Posterior vena cava (tissue), 2 donors: ENCODE measurements at regions of chr2 and their contacts with region 1.

Region 1: GRCh38 chr2:23083966-23084365 is 301.0 kb upstream of the KLHL29 start:
- DNase-seq: no peak

Region 2: DNA sequence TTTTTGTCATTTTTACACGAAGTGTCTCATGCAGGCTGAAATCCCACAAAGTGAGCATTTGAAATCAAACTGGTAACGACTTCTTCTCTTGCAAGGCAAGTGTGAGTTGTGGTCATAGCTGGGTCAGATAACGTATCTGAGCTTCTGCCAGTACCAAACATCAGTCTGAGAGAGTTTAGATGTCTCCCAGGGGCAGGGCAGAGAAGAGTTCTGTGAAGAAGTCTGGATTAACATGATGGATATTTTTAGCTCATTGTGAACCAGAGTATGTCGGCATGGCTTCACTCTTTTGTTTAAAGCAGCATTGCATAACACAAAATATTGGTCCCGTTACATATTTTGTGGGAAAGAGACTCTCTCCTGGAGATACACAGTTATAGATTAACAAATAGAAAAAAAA is 354.5 kb before region 1 on chr2:
- intact Hi-C with region 1: no loop called
- DNase-seq: no peak

Region 3: DNA sequence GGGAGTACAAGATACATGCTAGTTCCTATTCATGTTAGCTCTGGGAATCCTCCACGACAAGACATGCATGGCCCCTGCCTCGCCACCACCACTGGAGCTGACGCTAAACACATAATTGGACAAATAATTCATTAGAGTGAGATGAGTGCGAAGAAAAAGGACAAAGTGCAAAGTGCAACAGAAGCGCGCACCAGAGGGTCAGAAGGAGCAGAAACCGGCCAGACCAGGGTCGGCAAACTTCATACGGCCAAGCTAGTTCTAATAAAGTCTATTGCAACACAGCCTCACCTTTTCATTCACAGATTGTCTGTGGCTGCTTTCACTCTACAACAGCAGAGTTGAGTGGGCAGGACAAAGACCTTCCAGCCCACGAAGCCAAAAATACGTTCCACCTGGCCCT is 34.9 kb after region 1 on chr2:
- intact Hi-C with region 1: loop called in 1 of 2 experiments (anchors 1 kb)
- DNase-seq: no peak